ENCODE measurements at regions of chr14 and their contacts with region 1.

Region 1: GRCh38 chr14:63044994-63045611 is at the start of gene KCNH5:
- DNase-seq: peak in 1 of 2 donors; percentile 25
- ATAC-seq: peak; percentile 64 to 84 (median 70)
- H3K4me3 ChIP-seq: peak within 1 kb of the TSS in 8 of 10 donors; percentile 17 to 35 (median 30)
- H3K27ac ChIP-seq: no peak within 1 kb of the TSS
- H3K4me1 ChIP-seq: peaks cover 0 to 15% (median 12%) of the 10 kb centered on the region in 9 donors
- H3K27me3 ChIP-seq: peaks cover 19 to 98% (median 87%) of the 10 kb centered on the region in 7 donors
- CTCF ChIP-seq: no peak
- total RNA-seq, gene KCNH5: 0.15 TPM in 1 of 10 donors, not detected in the others

Region 2: GRCh38 chr14:62162998-62163589 is 882.0 kb before region 1 on chr14:
- intact Hi-C with region 1: loop called in 1 of 10 experiments (anchors 10 kb)
- DNase-seq: no peak
- ATAC-seq: peak in 3 of 8 donors; percentile 42 to 49 (median 44)
- H3K4me3 ChIP-seq: no peak overlapping the region
- H3K27ac ChIP-seq: no peak overlapping the region
- H3K4me1 ChIP-seq: no peaks in the 10 kb centered on the region
- H3K27me3 ChIP-seq: peaks cover 0 to 47% (median 13%) of the 10 kb centered on the region in 7 donors
- CTCF ChIP-seq: peak; percentile 28 to 75 (median 62)